Endothelial cell of umbilical vein (primary cell): ENCODE measurements at regions of chr13 and their contacts with region 1.

Region 1: GRCh38 chr13:20594280-20594679 is 27.3 kb downstream of the IFT88 start:
- DNase-seq: no peak
- H3K4me3 ChIP-seq: no peak overlapping the region
- H3K27ac ChIP-seq: no peak overlapping the region
- H3K4me1 ChIP-seq: no peaks in the 10 kb centered on the region
- H3K27me3 ChIP-seq: no peaks in the 10 kb centered on the region
- CTCF ChIP-seq: no peak
- POLR2A ChIP-seq: no peak

Region 2: DNA sequence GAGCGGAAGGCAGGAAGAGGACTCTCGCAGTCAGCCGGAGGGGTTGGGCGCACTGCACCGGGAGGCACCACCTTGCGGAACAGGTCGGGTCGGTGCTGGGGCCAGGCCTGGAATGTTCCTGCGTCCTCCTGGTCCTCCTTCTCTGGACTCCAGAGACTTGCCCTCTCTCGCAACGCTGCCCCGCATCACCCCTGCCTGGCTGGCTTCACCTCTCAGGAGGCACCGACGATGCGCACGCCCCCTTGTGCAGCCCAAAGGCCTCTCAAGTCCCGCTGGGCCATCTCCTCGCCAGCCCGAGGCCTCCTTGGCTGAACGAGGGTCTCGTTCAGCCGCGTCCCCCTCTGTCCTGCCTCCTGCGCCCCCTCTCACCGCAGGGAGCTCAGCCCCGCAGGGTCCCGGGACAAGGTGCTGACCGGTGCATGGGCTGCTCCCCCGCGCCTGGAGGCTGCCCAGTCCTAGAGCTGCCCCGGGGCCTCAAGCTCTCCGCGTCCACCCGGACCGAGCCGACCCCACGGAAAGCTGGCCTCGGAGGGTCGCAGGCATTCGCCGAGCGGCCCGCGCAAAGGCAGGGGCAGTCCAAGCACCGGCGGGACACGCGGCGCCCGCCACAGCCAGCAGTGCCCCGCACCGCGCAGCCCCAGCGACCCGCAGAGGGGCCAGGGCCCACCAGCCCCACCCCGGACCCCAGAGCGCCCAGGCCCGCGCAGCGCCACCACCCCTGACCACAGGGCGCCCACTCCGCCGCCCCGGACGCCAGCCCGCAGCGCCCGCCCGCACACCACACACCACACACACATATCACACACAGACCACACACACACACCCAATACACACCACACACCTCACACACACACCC is 202.5 kb before region 1 on chr13:
- CTCF ChIA-PET with region 1: no interaction called
- POLR2A ChIA-PET with region 1: no interaction called
- dilution Hi-C with region 1: no loop called
- intact Hi-C with region 1: no loop called
- DNase-seq: no peak
- H3K4me3 ChIP-seq: no peak overlapping the region
- H3K27ac ChIP-seq: no peak overlapping the region
- H3K4me1 ChIP-seq: no peaks in the 10 kb centered on the region
- H3K27me3 ChIP-seq: no peaks in the 10 kb centered on the region
- CTCF ChIP-seq: no peak
- POLR2A ChIP-seq: no peak

Region 3: DNA sequence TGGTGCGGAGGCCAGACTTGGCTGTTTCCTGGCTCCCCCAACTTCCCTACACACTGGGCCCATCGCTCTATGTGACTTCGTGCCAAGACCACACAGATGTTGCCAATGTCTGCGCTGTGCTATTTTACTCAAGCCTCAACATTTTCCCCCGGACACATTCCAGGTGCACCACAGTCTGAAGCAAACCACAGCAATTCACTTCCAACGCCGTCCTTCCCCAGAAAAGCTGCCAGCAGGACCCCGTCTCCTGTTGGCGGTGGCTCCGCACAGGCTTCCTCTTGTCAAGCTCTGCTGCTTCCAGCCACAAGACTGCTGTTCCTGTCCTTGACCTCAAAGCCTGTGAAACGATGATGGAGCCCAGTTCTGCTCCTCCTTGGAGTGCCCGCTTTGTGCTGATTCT is 169.3 kb before region 1 on chr13:
- CTCF ChIA-PET with region 1: no interaction called
- POLR2A ChIA-PET with region 1: no interaction called
- dilution Hi-C with region 1: no loop called
- intact Hi-C with region 1: no loop called
- DNase-seq: no peak
- H3K4me3 ChIP-seq: no peak overlapping the region
- H3K27ac ChIP-seq: no peak overlapping the region
- H3K4me1 ChIP-seq: no peaks in the 10 kb centered on the region
- H3K27me3 ChIP-seq: no peaks in the 10 kb centered on the region
- CTCF ChIP-seq: no peak
- POLR2A ChIP-seq: no peak

Region 4: DNA sequence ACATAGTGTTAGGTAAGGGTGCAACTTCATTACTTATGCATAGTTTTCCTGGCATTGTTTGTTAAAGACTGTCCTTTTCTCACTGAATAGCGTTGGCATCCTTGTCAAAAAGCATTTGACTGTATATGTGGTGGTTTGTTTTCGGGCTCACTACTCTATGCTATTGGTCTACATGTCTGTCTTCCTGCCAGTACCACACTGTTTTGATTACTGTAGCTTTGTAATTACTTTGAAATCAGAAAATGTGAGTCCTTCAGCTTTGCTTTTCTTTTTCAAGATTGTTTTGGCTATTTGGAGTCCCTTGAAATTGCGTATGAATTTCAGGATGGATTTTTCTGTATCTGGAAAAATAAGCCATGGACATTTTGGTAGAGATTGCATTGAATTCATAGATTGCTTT is 28.7 kb after region 1 on chr13:
- CTCF ChIA-PET with region 1: interaction called, 3 read pairs
- POLR2A ChIA-PET with region 1: no interaction called
- dilution Hi-C with region 1: no loop called
- intact Hi-C with region 1: loop called (anchors 1 kb)
- DNase-seq: no peak
- H3K4me3 ChIP-seq: no peak overlapping the region
- H3K27ac ChIP-seq: no peak overlapping the region
- H3K4me1 ChIP-seq: no peaks in the 10 kb centered on the region
- H3K27me3 ChIP-seq: no peaks in the 10 kb centered on the region
- CTCF ChIP-seq: no peak
- POLR2A ChIP-seq: no peak

Region 5: DNA sequence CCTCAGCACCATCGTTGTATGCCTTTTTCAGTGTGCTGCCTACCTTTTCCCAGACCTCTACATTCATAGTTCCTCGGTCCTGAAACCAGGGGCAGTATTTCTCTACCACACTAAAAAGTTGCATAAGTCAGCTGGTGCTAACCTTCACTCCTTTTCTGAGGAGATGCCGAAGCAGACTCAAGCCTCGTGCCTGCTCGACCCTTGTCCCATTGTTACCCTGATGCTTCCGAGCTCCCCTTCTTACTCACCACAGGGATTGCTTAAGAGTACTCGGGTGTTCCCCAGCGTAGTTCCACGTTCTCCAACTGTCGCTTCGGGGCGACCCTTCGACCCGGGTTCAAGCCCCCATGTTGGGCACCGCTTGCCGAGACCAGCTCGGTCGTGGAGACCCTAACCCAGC is 90.3 kb after region 1 on chr13:
- CTCF ChIA-PET with region 1: no interaction called
- POLR2A ChIA-PET with region 1: no interaction called
- dilution Hi-C with region 1: no loop called
- intact Hi-C with region 1: no loop called
- DNase-seq: no peak
- H3K4me3 ChIP-seq: no peak overlapping the region
- H3K27ac ChIP-seq: no peak overlapping the region
- H3K4me1 ChIP-seq: no peaks in the 10 kb centered on the region
- H3K27me3 ChIP-seq: no peaks in the 10 kb centered on the region
- CTCF ChIP-seq: no peak
- POLR2A ChIP-seq: no peak